A673 (cell line): ENCODE measurements at regions of chr12 and their contacts with region 1.

Region 1: DNA sequence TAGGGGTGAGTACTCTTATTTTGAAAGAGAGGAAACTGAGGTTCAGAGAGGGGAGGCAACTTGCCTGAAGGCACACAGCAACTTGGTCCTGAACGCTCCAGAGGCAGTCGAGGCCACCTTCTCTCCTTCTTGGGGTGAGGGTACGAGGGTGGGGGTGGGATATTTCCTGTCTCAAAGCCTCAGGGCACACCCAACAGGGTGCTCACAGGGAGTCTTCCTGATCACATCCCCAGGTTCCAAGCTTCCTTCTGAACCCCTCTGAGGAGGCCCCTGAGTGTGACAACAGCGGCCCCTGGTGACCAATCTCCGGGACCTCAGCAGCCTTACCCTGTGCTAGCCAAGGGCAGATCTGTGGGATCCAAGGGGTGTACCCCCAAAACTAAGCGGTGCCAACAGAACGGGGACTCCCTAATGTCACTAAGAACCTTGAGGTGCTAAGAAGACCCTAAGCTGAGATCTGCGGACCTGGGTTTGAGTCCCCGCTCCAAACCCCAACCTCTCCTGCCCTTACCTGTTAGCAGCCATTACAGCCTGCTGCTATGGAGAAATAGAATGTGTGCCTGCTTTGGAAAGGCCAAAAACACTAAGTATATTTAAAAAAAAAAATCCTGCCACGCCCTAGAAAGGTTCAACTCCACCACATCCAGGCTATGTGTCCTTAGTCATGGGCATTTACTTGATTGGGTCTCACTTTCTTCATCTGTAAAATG is 57.9 kb downstream of the TRPV4 start:
- DNase-seq: peak; percentile 88
- H3K4me3 ChIP-seq: no peak overlapping the region
- H3K27ac ChIP-seq: no peak overlapping the region
- H3K4me1 ChIP-seq: no peaks in the 10 kb centered on the region
- H3K27me3 ChIP-seq: no peaks in the 10 kb centered on the region
- CTCF ChIP-seq: peak; percentile 92

Region 2: DNA sequence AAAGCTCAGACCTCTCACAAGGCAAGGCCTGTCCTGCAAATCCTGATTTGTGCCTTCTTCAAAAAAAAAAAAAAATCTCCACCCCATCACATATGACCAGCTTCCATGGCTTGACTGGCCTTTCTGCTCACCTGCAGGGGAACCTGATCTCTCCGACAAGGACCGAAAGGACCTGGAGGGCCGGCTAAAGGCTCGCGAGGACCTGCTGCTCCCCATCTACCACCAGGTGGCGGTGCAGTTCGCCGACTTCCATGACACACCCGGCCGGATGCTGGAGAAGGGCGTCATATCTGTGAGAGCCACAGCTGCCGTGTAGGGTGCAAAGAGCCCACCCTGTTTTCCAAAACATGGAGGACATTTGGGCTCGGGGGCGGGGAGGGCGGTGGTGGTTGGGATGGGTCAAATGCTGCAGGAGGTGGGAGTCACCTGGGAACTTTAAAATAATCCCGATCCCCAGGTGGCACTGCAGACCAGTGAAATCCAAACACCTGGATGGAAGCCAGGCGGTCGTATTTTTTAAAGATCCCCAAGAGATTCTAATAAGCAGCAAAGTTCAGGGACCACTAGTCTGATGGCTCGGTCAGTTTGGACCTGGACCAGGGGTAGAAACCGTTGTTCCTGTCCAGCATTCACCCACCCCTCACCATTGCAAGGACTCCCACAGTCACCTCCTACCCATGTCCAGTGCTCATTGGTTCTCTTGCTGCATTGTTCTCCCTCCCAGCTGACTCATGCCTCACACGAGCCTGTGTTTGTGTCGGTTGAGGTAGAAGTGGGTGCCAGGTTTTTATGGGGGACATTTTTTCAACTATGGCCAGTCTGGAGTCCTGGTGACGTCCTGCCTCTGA is 511.0 kb before region 1 on chr12:
- CTCF ChIA-PET with region 1: no interaction called
- POLR2A ChIA-PET with region 1: no interaction called
- intact Hi-C with region 1: loop called (anchors 5 kb)
- DNase-seq: peak; percentile 87
- H3K4me3 ChIP-seq: no peak overlapping the region
- H3K27ac ChIP-seq: no peak overlapping the region
- H3K4me1 ChIP-seq: no peaks in the 10 kb centered on the region
- H3K27me3 ChIP-seq: no peaks in the 10 kb centered on the region
- CTCF ChIP-seq: peak; percentile 92

Region 3: DNA sequence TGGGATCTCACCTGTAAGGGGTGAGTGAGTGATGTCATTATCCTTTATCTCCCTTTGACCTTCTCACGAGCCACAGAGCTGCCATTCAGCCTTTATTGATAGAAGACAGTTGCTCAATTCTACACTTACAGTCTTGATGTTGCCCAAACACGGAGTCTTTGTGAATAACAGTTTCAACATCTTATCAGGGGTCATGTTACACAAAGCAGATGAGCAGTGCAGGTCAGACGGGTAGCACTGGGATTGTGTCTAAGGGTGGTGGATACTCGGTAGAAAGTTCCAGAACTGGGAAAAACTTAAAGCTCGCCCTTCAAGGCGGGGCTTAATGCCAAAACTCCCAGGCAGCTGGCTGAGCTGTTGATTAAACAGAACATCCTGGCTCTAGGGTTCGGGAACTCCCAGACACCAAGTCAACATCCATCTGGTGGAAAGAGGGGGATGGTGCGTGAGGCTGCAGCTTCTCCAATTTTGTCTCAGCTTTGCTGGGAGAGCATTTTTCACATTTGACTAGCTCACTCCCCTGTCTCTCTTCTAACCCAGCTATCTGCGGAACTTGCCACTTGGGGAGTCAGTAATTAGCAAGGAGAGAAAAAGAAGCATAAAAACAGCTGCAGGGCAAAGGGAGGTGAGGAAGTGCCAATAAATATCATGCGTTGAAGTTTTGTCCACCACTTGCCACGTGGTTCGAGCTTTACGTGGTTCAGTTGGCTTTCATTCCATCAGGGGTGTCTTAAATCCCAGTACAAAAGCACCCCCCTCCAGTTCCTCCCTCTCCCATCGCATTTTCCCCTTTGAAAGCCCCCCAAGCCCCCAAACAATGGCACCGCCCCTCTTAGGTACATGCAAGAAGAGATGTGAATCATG is 497.2 kb before region 1 on chr12:
- CTCF ChIA-PET with region 1: no interaction called
- POLR2A ChIA-PET with region 1: no interaction called
- intact Hi-C with region 1: no loop called
- DNase-seq: no peak
- H3K4me3 ChIP-seq: no peak overlapping the region
- H3K27ac ChIP-seq: no peak overlapping the region
- H3K4me1 ChIP-seq: no peaks in the 10 kb centered on the region
- H3K27me3 ChIP-seq: no peaks in the 10 kb centered on the region
- CTCF ChIP-seq: no peak

Region 4: DNA sequence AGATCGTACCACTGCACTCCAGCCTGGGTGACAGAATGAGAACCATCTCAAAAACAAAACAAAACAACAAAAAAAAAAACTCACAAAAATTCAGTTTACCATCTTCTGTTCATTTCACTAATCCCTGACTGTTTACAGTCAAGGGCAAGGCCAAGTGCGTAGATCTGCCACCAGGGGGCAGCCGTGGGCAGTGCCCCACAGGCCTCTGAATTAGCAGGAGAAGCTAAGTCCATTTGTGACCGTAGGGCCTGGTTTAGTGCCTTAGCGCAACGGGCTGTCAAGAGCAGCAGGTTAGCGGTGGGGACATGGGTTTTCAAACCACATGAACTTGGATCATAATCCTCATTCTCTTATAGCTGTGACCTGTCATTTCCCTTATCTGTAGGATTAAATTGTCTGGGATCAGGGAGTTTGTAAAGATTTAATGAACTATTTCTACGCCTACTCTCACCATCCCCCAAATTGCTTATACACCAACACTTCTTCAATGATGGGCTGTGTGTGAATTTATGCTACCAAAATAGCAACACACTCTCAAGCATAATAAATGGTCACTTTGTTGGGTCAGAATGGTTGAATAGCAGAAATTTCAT is 347.2 kb before region 1 on chr12:
- CTCF ChIA-PET with region 1: interaction called, 12 read pairs
- POLR2A ChIA-PET with region 1: no interaction called
- intact Hi-C with region 1: loop called (anchors 2 kb)
- DNase-seq: peak; percentile 84
- H3K4me3 ChIP-seq: no peak overlapping the region
- H3K27ac ChIP-seq: no peak overlapping the region
- H3K4me1 ChIP-seq: no peaks in the 10 kb centered on the region
- H3K27me3 ChIP-seq: no peaks in the 10 kb centered on the region
- CTCF ChIP-seq: peak; percentile 99

Region 5: GRCh38 chr12:109518820-109519665 is 256.3 kb before region 1 on chr12:
- CTCF ChIA-PET with region 1: interaction called, 24 read pairs
- POLR2A ChIA-PET with region 1: no interaction called
- intact Hi-C with region 1: loop called (anchors 1 kb)
- DNase-seq: peak; percentile 80
- H3K4me3 ChIP-seq: no peak overlapping the region
- H3K27ac ChIP-seq: peak overlapping the region; percentile 66
- H3K4me1 ChIP-seq: peaks cover 17% of the 10 kb centered on the region
- H3K27me3 ChIP-seq: no peaks in the 10 kb centered on the region
- CTCF ChIP-seq: peak; percentile 96

Region 6: DNA sequence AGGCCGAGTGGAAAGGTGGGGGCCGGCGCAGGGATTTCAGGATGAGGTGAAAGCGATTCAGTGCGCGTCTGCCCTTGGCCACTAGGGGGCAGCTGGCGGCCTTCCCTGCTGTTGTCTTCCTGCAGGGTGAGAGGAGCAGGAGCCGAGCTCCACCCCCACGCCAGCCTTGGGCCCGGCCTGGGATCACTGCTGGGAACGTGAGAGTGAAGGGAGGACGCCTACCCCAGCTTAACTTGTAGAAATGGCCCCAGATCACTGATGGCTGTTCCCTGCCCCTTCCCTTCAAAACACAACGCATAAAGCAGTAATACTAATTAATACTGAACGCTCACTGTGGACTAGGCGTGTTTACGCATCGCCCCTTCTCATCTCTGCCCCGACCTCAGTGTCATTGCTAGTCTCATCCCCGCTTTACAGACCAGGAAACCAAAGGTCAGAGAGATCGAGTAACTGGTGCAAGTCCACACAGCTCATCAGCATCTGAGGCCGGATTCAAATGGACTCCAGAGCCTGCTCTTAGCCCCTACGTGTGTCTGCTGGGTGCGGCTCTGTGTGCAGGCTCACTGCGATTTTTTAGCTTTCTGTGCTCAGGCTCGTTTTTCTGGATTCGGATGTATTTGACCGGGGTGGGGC is 177.4 kb before region 1 on chr12:
- CTCF ChIA-PET with region 1: interaction called, 44 read pairs
- POLR2A ChIA-PET with region 1: no interaction called
- intact Hi-C with region 1: loop called (anchors 1 kb)
- DNase-seq: peak; percentile 89
- H3K4me3 ChIP-seq: no peak overlapping the region
- H3K27ac ChIP-seq: no peak overlapping the region
- H3K4me1 ChIP-seq: peaks cover 4% of the 10 kb centered on the region
- H3K27me3 ChIP-seq: no peaks in the 10 kb centered on the region
- CTCF ChIP-seq: peak; percentile 98